ENCODE measurements at regions of chr6 and their contacts with region 1.

Region 1: GRCh38 chr6:104682722-104683643 is 176.7 kb downstream of the HACE1 start:
- DNase-seq: peak; percentile 64
- CTCF ChIP-seq: peak; percentile 69

Region 2: DNA sequence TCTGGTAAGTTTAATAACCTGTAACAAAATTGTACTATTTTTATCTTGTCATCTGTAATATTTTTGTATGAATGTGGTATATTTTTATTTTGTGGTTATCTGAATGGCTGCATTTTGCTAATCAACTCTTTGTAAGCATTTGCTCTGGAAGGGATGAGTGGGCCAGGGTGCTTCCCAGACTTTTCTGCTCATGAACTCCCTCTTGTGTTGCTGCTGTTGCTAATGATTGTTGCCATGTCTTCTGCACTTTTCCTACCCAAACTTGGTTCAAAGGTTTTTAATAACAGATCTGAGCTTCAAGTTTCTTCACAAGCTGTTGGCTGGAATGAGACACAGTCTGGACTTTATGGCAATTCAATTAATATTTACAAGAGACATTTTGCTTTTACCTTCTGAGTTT is 828.9 kb before region 1 on chr6:
- CTCF ChIA-PET with region 1: no interaction called
- POLR2A ChIA-PET with region 1: no interaction called
- DNase-seq: no peak
- CTCF ChIP-seq: no peak

Region 3: GRCh38 chr6:104771258-104771832 is 88.4 kb after region 1 on chr6:
- CTCF ChIA-PET with region 1: interaction called, 14 read pairs
- POLR2A ChIA-PET with region 1: no interaction called
- DNase-seq: peak; percentile 18
- CTCF ChIP-seq: no peak

Region 4: GRCh38 chr6:105077596-105078385 is 394.8 kb after region 1 on chr6:
- CTCF ChIA-PET with region 1: interaction called, 10 read pairs
- POLR2A ChIA-PET with region 1: no interaction called
- DNase-seq: peak; percentile 30
- CTCF ChIP-seq: peak; percentile 45